Endothelial cell of umbilical vein (primary cell): ENCODE measurements at regions of chr14 and their contacts with region 1.

Region 1: DNA sequence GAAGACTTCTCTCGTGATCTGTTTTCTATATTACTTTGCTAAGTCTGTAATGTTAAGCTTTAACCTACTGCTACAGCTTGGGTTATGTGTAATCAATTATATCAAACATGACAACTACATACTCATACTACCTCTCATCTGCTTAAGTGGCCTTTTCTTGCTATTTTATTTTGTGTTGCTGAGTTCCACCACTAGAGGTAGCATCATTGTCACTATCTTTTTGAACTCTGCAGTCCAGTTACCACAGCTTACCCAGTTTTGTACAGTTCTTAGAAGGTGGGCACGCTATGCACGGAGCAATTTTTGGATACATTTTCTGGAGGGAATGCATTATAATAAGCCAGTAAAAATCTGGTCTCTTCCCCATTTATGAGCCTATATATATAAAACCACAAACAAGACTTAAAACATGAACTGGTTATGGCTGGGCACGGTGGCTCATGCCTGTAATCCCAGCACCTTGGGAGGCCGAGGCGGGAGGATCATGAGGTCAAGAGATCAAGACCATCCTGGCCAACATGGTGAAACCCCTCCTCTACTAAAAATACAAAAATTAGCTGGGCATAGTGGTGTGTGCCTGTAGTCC is 48.5 kb downstream of the SAV1 start:
- DNase-seq: peak; percentile 70
- H3K4me3 ChIP-seq: no peak overlapping the region
- H3K27ac ChIP-seq: no peak overlapping the region
- H3K4me1 ChIP-seq: peaks cover 5% of the 10 kb centered on the region
- H3K27me3 ChIP-seq: no peaks in the 10 kb centered on the region
- CTCF ChIP-seq: peak; percentile 37 to 42
- POLR2A ChIP-seq: no peak

Region 2: DNA sequence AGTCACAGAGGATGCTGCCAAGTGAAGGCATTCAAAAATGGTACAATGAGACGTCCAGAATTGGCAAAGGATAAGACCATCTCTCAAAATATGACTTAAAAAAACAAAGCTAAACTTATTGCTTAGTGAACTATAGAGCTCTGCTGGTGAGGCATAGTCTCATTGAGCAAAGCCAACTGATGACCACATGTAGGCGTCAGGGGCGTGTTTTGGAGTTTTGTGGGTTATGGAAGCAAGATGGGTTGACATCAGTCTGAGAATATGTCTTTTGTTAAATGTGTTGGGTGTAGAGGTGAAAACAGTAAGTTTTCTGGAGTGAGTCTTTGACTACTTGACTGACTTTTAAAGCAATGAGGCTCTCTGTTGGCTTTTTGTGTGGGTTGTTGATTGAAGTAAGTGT is 12.5 kb before region 1 on chr14:
- CTCF ChIA-PET with region 1: interaction called, 15 read pairs
- POLR2A ChIA-PET with region 1: no interaction called
- dilution Hi-C with region 1: no loop called
- intact Hi-C with region 1: no loop called
- DNase-seq: no peak
- H3K4me3 ChIP-seq: no peak overlapping the region
- H3K27ac ChIP-seq: no peak overlapping the region
- H3K4me1 ChIP-seq: peaks cover 16% of the 10 kb centered on the region
- H3K27me3 ChIP-seq: no peaks in the 10 kb centered on the region
- CTCF ChIP-seq: no peak
- POLR2A ChIP-seq: no peak

Region 3: GRCh38 chr14:50631408-50631821 is 11.8 kb after region 1 on chr14:
- CTCF ChIA-PET with region 1: interaction called, 10 read pairs
- POLR2A ChIA-PET with region 1: interaction called, 4 read pairs
- dilution Hi-C with region 1: no loop called
- intact Hi-C with region 1: no loop called
- DNase-seq: no peak
- H3K4me3 ChIP-seq: no peak overlapping the region
- H3K27ac ChIP-seq: no peak overlapping the region
- H3K4me1 ChIP-seq: peaks cover 2% of the 10 kb centered on the region
- H3K27me3 ChIP-seq: no peaks in the 10 kb centered on the region
- CTCF ChIP-seq: no peak
- POLR2A ChIP-seq: no peak

Region 4: DNA sequence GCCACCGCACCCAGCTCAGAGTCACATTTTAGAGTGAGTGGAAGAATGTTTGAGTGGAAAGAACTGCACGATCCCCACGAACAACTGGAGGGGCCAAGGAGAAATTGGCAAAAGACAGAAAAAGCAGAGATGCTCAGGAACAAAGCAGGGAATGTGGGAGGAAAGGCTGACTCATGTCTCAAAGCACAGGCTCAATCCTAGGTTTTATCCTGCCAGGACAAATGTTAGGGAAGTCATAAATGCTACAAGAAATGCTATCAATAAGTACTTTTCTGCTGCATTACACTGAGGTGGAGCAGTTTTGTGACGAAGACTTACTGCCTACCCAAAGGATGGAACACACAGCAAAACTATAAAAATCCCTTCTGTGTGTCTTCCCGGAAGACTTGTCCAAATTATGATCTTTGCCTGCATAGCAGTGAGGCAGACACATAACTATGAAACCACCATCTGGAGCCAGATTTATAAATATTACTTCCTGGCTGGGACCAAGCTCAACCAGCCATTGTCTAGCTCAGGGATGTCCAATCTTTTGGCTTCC is 184.6 kb after region 1 on chr14:
- CTCF ChIA-PET with region 1: no interaction called
- POLR2A ChIA-PET with region 1: no interaction called
- dilution Hi-C with region 1: no loop called
- intact Hi-C with region 1: no loop called
- DNase-seq: peak; percentile 78
- H3K4me3 ChIP-seq: no peak overlapping the region
- H3K27ac ChIP-seq: peak overlapping the region; percentile 78
- H3K4me1 ChIP-seq: peaks cover 54% of the 10 kb centered on the region
- H3K27me3 ChIP-seq: no peaks in the 10 kb centered on the region
- CTCF ChIP-seq: no peak
- POLR2A ChIP-seq: no peak

Region 5: DNA sequence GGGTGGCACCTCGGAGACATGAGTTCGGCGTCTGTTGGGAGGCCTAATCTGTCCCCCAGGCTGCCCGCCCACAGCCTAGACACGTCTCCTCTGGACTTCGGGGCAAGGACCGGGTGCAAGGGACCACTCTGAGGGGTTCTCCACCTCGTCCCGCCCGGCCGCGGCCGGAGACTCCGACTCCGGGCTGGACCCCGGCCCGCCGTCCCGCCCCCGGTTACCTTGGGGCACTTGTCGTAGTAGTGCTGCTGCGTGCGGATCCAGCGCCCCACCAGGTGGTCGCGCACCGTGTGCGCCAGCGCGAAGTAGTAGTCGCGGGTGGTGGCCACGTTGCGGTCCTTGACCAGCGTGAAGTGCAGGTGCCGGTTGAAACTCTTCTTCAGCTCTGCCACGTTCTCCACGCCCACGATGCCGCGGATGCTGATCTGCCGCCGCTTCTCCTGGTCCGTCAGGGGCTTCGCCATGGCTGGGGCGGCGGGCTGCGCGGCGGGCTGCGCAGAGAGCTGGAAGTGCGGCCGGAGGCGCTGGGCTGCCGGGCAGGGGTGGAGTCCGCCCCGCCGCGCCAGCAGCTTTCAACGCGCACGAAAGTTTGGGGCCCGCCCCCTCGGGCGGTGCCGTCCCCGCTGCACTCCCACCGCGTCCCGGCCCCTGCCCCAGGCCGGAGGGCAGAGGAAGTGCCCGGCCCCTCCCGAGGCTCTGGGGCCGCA is 324.4 kb after region 1 on chr14 and contains the start of gene PYGL:
- CTCF ChIA-PET with region 1: no interaction called
- POLR2A ChIA-PET with region 1: no interaction called
- dilution Hi-C with region 1: no loop called
- intact Hi-C with region 1: no loop called
- DNase-seq: peak; percentile 57
- H3K4me3 ChIP-seq: peak within 1 kb of the TSS; percentile 55 to 79 (median 64)
- H3K27ac ChIP-seq: no peak within 1 kb of the TSS
- H3K4me1 ChIP-seq: peaks cover 13% of the 10 kb centered on the region
- H3K27me3 ChIP-seq: no peaks in the 10 kb centered on the region
- CTCF ChIP-seq: peak in 1 of 2 donors; percentile 13
- POLR2A ChIP-seq: no peak
- total RNA-seq, gene PYGL: 45.7 and 46.6 TPM in 2 replicates